CD8-positive, alpha-beta T cell (primary cell): ENCODE measurements at regions of chr19 and their contacts with region 1.

Region 1: GRCh38 chr19:54203151-54203611 is 2.5 kb downstream of the RPS9 start:
- DNase-seq: no peak
- ATAC-seq: no peak
- H3K4me3 ChIP-seq: no peak overlapping the region
- H3K4me3 Mint-ChIP-seq: peak overlapping the region; percentile 100
- H3K27ac ChIP-seq: no peak overlapping the region
- H3K27ac Mint-ChIP-seq: peak overlapping the region; percentile 70
- H3K4me1 ChIP-seq: peaks cover 68% of the 10 kb centered on the region
- H3K4me1 Mint-ChIP-seq: peaks cover 77% of the 10 kb centered on the region
- H3K27me3 ChIP-seq: no peaks in the 10 kb centered on the region
- H3K27me3 Mint-ChIP-seq: no peaks in the 10 kb centered on the region
- CTCF ChIP-seq: no peak

Region 2: GRCh38 chr19:54102421-54103169 is 100.6 kb before region 1 on chr19 and contains the start of gene NDUFA3:
- CTCF ChIA-PET with region 1: no interaction called
- POLR2A ChIA-PET with region 1: no interaction called
- intact Hi-C with region 1: loop called (anchors 1 kb)
- DNase-seq: peak; percentile 94 to 100 (median 98)
- ATAC-seq: peak; percentile 99
- H3K4me3 ChIP-seq: peak within 1 kb of the TSS; percentile 66 to 81
- H3K4me3 Mint-ChIP-seq: peak within 1 kb of the TSS; percentile 99
- H3K27ac ChIP-seq: peak within 1 kb of the TSS; percentile 58 to 84
- H3K27ac Mint-ChIP-seq: peak within 1 kb of the TSS; percentile 96
- H3K4me1 ChIP-seq: peaks cover 10% of the 10 kb centered on the region
- H3K4me1 Mint-ChIP-seq: peaks cover 35% of the 10 kb centered on the region
- H3K27me3 ChIP-seq: no peaks in the 10 kb centered on the region
- H3K27me3 Mint-ChIP-seq: no peaks in the 10 kb centered on the region
- CTCF ChIP-seq: no peak
- total RNA-seq, gene NDUFA3: 51.8 to 66.8 TPM

Region 3: GRCh38 chr19:54159352-54160181 is 43.6 kb before region 1 on chr19 and contains the start of gene LENG1:
- CTCF ChIA-PET with region 1: no interaction called
- POLR2A ChIA-PET with region 1: interaction called, 14 read pairs
- intact Hi-C with region 1: loop called (anchors 2 kb)
- DNase-seq: peak; percentile 96 to 100 (median 98)
- ATAC-seq: peak; percentile 84
- H3K4me3 ChIP-seq: peak within 1 kb of the TSS; percentile 71 to 75
- H3K4me3 Mint-ChIP-seq: peak within 1 kb of the TSS; percentile 99
- H3K27ac ChIP-seq: peak within 1 kb of the TSS; percentile 79 to 87
- H3K27ac Mint-ChIP-seq: peak within 1 kb of the TSS; percentile 99
- H3K4me1 ChIP-seq: peaks cover 67% of the 10 kb centered on the region
- H3K4me1 Mint-ChIP-seq: peaks cover 59% of the 10 kb centered on the region
- H3K27me3 ChIP-seq: peaks cover 0 to 2% of the 10 kb centered on the region in 2 experiments
- H3K27me3 Mint-ChIP-seq: peaks cover 2% of the 10 kb centered on the region
- CTCF ChIP-seq: no peak
- total RNA-seq, gene LENG1: 15.5 to 15.8 TPM

Region 4: DNA sequence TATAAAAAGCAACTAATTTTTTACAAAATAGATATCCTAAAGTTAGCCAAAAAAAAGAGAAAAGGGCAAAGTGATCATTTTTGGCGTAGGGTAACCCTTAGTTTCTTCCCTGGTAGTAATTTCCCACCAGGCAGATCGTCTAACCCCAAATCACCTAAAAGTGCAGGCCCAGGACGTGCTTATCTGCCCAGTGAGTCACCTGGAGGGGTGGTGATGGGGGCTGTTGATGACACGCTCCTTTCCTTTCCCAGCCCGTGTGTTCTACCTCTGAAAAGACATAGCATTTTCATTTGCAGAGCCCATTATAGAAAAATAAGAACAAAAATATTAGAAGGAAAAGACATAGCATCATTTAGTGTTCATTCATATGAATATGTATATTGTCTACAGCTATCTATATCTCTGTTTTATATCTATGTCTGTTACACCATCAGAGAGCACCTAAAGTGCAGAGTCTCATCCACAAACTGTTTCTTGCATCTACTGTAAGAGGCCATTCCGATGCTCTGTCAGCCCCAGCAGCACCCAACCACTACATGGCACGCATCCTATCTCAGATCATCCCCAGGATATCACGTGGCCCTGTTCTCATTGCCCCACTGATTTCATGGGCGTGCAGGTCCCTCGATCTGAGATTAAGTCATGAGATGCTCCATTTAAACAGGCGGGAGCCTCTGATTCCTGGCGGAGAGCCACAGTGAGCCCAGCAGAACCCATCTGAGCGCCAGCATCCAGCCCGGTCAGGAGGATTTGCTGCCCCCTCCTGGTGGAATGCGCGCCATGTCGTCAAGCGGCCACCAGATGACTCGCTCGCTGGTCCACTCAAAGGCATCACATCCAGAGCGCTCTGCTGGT is 28.1 kb after region 1 on chr19:
- CTCF ChIA-PET with region 1: interaction called, 3 read pairs
- POLR2A ChIA-PET with region 1: no interaction called
- intact Hi-C with region 1: loop called (anchors 1 to 2 kb)
- DNase-seq: peak; percentile 75 to 93 (median 87)
- ATAC-seq: peak; percentile 98
- H3K4me3 ChIP-seq: no peak overlapping the region
- H3K4me3 Mint-ChIP-seq: no peak overlapping the region
- H3K27ac ChIP-seq: no peak overlapping the region
- H3K27ac Mint-ChIP-seq: no peak overlapping the region
- H3K4me1 ChIP-seq: no peaks in the 10 kb centered on the region
- H3K4me1 Mint-ChIP-seq: no peaks in the 10 kb centered on the region
- H3K27me3 ChIP-seq: peaks cover 0 to 3% of the 10 kb centered on the region in 2 experiments
- H3K27me3 Mint-ChIP-seq: peaks cover 13% of the 10 kb centered on the region
- CTCF ChIP-seq: peak; percentile 96

Region 5: GRCh38 chr19:54257116-54257480 is 53.9 kb after region 1 on chr19 and contains the start of gene LILRB5:
- CTCF ChIA-PET with region 1: no interaction called
- POLR2A ChIA-PET with region 1: no interaction called
- intact Hi-C with region 1: no loop called
- DNase-seq: peak in 1 of 9 experiments; percentile 48
- ATAC-seq: no peak
- H3K4me3 ChIP-seq: no peak within 1 kb of the TSS
- H3K4me3 Mint-ChIP-seq: no peak within 1 kb of the TSS
- H3K27ac ChIP-seq: no peak within 1 kb of the TSS
- H3K27ac Mint-ChIP-seq: no peak within 1 kb of the TSS
- H3K4me1 ChIP-seq: no peaks in the 10 kb centered on the region
- H3K4me1 Mint-ChIP-seq: no peaks in the 10 kb centered on the region
- H3K27me3 ChIP-seq: no peaks in the 10 kb centered on the region
- H3K27me3 Mint-ChIP-seq: peaks cover 5% of the 10 kb centered on the region
- CTCF ChIP-seq: no peak
- total RNA-seq, gene LILRB5: not detected

Region 6: GRCh38 chr19:54287456-54287855 is 84.3 kb after region 1 on chr19:
- CTCF ChIA-PET with region 1: no interaction called
- POLR2A ChIA-PET with region 1: no interaction called
- intact Hi-C with region 1: no loop called
- DNase-seq: no peak
- ATAC-seq: no peak
- H3K4me3 ChIP-seq: no peak overlapping the region
- H3K4me3 Mint-ChIP-seq: no peak overlapping the region
- H3K27ac ChIP-seq: no peak overlapping the region
- H3K27ac Mint-ChIP-seq: no peak overlapping the region
- H3K4me1 ChIP-seq: peaks cover 4% of the 10 kb centered on the region
- H3K4me1 Mint-ChIP-seq: peaks cover 8% of the 10 kb centered on the region
- H3K27me3 ChIP-seq: no peaks in the 10 kb centered on the region
- H3K27me3 Mint-ChIP-seq: peaks cover 8% of the 10 kb centered on the region
- CTCF ChIP-seq: no peak

Region 7: DNA sequence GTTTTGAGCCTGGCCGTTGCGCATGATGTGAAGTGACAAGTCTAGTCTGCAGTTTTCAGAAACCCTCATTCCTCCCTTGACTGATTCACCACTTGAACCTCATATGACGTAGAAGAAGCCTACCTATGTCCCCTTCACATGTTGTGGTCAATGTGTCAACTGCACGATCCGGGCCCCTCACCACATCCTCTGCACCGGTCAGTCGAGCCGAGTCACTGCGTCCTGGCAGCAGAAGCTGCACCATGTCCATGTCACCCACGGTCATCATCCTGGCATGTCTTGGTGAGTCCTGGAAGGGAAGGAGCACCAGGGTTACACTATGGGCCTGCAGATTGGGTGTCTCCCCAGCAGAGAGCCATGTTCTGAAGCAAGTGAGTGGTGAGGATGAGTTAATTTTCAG is 600.2 kb after region 1 on chr19 and contains the start of gene KIR2DL4:
- CTCF ChIA-PET with region 1: no interaction called
- POLR2A ChIA-PET with region 1: no interaction called
- intact Hi-C with region 1: no loop called
- DNase-seq: peak in 5 of 9 experiments; percentile 6 to 72 (median 36)
- ATAC-seq: peak; percentile 23
- H3K4me3 ChIP-seq: no peak within 1 kb of the TSS
- H3K4me3 Mint-ChIP-seq: no peak within 1 kb of the TSS
- H3K27ac ChIP-seq: no peak within 1 kb of the TSS
- H3K27ac Mint-ChIP-seq: no peak within 1 kb of the TSS
- H3K4me1 ChIP-seq: no peaks in the 10 kb centered on the region
- H3K4me1 Mint-ChIP-seq: no peaks in the 10 kb centered on the region
- H3K27me3 ChIP-seq: peaks cover 0 to 2% of the 10 kb centered on the region in 2 experiments
- H3K27me3 Mint-ChIP-seq: peaks cover 21% of the 10 kb centered on the region
- CTCF ChIP-seq: no peak
- total RNA-seq, gene KIR2DL4: not detected